H1 (cell line): ENCODE measurements at regions of chr6 and their contacts with region 1.

Region 1: DNA sequence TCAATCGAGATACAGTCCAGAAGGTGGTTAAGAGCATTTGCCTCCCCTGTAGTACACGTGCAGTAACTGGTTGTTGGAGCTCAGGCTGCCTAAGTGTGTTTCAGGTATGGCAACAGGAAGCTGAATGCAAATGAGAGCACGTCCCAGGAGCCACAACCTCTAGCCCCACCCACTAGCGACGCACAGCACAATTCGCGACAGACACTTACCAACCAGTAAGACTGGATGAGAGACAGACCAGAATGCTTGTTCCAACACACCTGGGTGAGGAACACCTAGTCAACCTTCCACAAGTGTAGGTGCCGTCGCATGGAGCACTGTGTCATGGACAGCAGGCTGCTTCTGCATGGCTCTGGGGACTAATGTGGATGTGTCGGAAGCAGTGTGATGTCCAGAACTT is 7.2 kb upstream of the SERPINB1 start:
- DNase-seq: no peak
- H3K4me3 ChIP-seq: no peak overlapping the region
- H3K27ac ChIP-seq: no peak overlapping the region
- H3K4me1 ChIP-seq: peaks cover 4 to 25% (median 9%) of the 10 kb centered on the region in 4 experiments
- H3K27me3 ChIP-seq: no peaks in the 10 kb centered on the region
- CTCF ChIP-seq: no peak
- EP300 ChIP-seq: no peak
- POLR2A ChIP-seq: peak in 1 of 2 experiments; percentile 62; a peak in 1 of 3 replicates
- RAD21 ChIP-seq: no peak

Region 2: DNA sequence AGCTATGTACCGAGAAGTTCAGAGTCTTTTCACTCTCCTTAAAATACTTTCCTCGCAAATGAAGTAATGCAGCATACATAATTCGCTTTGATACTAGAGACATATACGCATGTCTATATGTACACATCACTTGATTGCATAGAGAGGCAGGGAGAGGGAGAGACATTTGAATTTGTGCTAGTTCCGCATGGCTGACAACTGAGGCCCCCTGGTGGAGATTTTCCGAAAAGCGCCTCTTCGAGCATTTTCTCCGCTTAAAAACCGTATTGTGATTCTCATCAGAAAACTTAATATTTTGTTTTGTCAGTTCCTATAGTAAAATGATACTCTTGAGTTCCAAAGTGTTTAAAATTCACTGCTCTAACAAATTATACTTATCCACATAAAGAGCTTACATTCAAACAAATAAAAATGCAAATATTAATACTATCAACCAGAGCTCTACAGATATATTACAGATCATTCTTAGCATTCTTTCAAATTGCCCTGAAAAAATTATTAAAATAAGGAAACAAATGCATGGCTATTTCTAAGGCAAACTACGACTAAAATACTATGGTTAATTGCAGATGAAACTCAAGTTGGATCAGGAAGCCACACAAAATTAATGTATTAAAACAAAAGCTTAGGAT is 98.8 kb before region 1 on chr6:
- CTCF ChIA-PET with region 1: no interaction called
- POLR2A ChIA-PET with region 1: no interaction called
- DNase-seq: peak in 1 of 2 experiments; percentile 81
- H3K4me3 ChIP-seq: no peak overlapping the region
- H3K27ac ChIP-seq: no peak overlapping the region
- H3K4me1 ChIP-seq: peaks cover 0 to 5% (median 2%) of the 10 kb centered on the region in 4 experiments; a peak in 4 of 7 replicates
- H3K27me3 ChIP-seq: no peaks in the 10 kb centered on the region
- CTCF ChIP-seq: peak; percentile 52 to 76 (median 73)
- EP300 ChIP-seq: no peak
- POLR2A ChIP-seq: no peak
- RAD21 ChIP-seq: peak; percentile 56 to 65

Region 3: GRCh38 chr6:2797564-2798031 is 51.3 kb before region 1 on chr6:
- CTCF ChIA-PET with region 1: interaction called, 38 read pairs
- POLR2A ChIA-PET with region 1: interaction called, 3 read pairs
- DNase-seq: no peak
- H3K4me3 ChIP-seq: no peak overlapping the region
- H3K27ac ChIP-seq: no peak overlapping the region
- H3K4me1 ChIP-seq: peaks cover 0 to 5% (median 2%) of the 10 kb centered on the region in 4 experiments; a peak in 2 of 7 replicates
- H3K27me3 ChIP-seq: no peaks in the 10 kb centered on the region
- CTCF ChIP-seq: no peak
- EP300 ChIP-seq: no peak
- POLR2A ChIP-seq: no peak
- RAD21 ChIP-seq: no peak

Region 4: GRCh38 chr6:2870056-2870674 is 21.3 kb after region 1 on chr6:
- CTCF ChIA-PET with region 1: interaction called, 27 read pairs
- POLR2A ChIA-PET with region 1: interaction called, 18 read pairs
- DNase-seq: no peak
- H3K4me3 ChIP-seq: no peak overlapping the region
- H3K27ac ChIP-seq: no peak overlapping the region
- H3K4me1 ChIP-seq: peaks cover 12 to 21% (median 16%) of the 10 kb centered on the region in 4 experiments
- H3K27me3 ChIP-seq: peaks cover 0 to 7% (median 6%) of the 10 kb centered on the region in 4 experiments; a peak in 3 of 7 replicates
- CTCF ChIP-seq: no peak
- EP300 ChIP-seq: no peak
- POLR2A ChIP-seq: no peak
- RAD21 ChIP-seq: no peak

Region 5: GRCh38 chr6:2917065-2917464 is 68.2 kb after region 1 on chr6:
- CTCF ChIA-PET with region 1: interaction called, 23 read pairs
- POLR2A ChIA-PET with region 1: no interaction called
- DNase-seq: peak in 1 of 2 experiments; percentile 46
- H3K4me3 ChIP-seq: no peak overlapping the region
- H3K27ac ChIP-seq: peak overlapping the region; percentile 43; the same call in 1 of the 2 replicates
- H3K4me1 ChIP-seq: peaks cover 9 to 32% (median 23%) of the 10 kb centered on the region in 4 experiments
- H3K27me3 ChIP-seq: no peaks in the 10 kb centered on the region
- CTCF ChIP-seq: peak in 2 of 3 experiments; percentile 32 to 42; a peak in 3 of 4 replicates
- EP300 ChIP-seq: no peak
- POLR2A ChIP-seq: no peak
- RAD21 ChIP-seq: peak in 1 of 2 experiments; percentile 26; a peak in 2 of 4 replicates

Region 6: GRCh38 chr6:2952557-2953095 is 103.8 kb after region 1 on chr6:
- CTCF ChIA-PET with region 1: interaction called, 17 read pairs
- POLR2A ChIA-PET with region 1: interaction called, 3 read pairs
- DNase-seq: peak; percentile 89 to 97
- H3K4me3 ChIP-seq: no peak overlapping the region; a peak in 1 of 8 replicates
- H3K27ac ChIP-seq: no peak overlapping the region
- H3K4me1 ChIP-seq: peaks cover 0 to 7% (median 3%) of the 10 kb centered on the region in 4 experiments; a peak in 6 of 7 replicates
- H3K27me3 ChIP-seq: no peaks in the 10 kb centered on the region
- CTCF ChIP-seq: peak; percentile 79 to 99 (median 89)
- EP300 ChIP-seq: no peak
- POLR2A ChIP-seq: no peak
- RAD21 ChIP-seq: peak; percentile 60 to 74